ENCODE measurements at regions of chr10 and their contacts with region 1.

Region 1: DNA sequence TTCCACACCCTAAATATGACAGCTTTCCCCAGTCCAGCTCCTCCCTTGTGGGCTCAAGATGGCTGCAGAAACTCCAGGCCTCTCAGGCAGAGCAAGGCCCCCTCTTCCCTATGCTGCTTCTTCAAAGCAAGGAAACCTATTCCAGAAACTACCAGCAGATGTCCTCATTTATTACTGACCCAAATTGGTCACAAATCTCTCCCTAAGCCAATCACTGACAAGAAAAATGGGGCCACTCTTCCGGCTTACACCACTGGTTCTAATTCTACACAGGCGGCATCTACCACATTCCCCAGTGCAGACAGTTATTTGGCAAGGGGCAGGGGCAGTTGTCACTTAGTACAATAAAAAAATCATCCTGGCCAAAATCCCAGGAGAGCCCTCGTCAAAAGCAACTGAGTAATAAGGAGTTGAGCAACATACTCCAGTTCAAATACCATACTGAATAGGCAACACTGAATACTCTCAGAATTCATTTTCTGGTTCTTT is 150.4 kb downstream of the SFMBT2 start:
- H3K4me3 Mint-ChIP-seq: no peak overlapping the region
- H3K27ac Mint-ChIP-seq: peak overlapping the region; percentile 16
- H3K4me1 Mint-ChIP-seq: peaks cover 38% of the 10 kb centered on the region
- H3K27me3 Mint-ChIP-seq: no peaks in the 10 kb centered on the region

Region 2: DNA sequence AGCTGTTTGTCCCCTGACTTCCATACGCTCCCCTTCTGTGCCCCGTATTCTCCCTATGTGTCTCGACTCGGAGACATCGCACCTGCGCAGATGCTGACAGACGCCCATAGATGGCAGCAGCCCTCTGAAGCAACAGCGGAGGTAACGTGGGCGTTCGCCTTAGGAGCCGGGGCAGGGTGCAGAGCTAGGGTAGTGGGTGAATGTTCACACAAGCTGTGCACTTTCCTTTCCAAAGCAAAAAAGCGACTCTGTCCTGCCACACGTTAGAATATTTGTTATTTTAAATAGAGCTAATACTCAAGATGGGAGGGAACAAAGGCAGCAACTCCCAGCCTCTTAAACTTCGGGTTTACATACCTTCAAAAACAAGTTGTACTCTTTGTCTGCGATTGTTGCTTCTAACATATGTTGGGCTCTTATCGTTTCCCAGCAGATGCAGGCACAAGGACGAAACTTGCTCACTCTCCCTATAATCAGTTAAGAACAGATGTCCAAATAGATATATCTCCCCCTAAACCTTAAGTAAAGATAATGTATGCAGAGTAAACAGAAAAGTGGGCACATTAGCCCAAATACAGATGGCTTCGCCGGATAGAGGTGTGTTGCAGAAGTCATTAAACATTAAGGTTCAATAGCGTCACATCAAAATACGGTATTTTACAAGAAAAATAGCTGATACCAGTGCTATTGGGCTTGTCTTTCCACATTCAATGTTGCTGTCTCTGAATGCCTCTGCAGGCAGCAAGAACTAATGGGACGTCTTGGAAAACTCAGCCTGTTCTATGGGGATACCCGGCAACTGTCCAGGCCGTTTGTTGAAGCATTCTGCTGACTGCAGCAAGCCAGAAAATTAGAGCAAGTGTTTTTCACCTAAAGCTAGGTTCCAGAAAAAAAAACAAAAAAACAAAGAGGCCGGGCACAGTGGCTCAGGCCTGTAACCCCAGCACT is 340.1 kb before region 1 on chr10:
- intact Hi-C with region 1: loop called (anchors 10 kb)
- H3K4me3 Mint-ChIP-seq: no peak overlapping the region
- H3K27ac Mint-ChIP-seq: no peak overlapping the region
- H3K4me1 Mint-ChIP-seq: peaks cover 30% of the 10 kb centered on the region
- H3K27me3 Mint-ChIP-seq: peaks cover 4% of the 10 kb centered on the region

Region 3: DNA sequence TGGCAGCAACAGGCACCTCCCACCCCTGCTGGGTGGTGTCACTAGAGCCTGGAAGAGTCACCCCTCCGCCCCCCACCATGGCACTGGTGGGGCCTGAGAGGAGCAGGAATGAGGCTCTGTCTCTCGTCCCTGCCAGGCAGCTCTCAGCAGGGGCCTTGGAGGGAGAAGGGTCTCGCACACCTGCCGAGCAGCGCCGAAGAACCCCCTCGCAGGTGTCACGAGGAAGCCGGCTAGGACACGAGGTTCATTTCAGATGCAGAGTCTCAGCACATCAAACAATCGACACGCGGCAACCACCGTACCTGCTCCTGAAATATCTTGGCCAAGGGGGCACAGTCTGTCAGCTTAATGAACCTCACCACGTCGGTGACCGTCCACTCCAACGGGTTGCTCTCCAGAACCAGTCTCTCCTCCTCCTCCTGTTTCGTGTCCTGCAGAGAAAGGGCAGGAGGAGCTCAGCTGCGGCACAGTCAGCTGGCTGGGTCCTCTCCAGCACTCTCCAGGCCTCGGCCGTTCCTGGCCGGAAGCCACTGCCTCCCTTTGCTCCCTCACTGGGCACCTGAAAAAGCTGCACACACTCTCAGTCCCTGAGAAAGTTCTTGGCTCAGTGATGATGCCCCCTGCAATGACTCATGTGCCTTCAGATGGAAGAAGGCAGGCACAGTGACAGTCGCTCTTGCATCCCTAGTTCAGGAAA is 89.7 kb before region 1 on chr10:
- intact Hi-C with region 1: no loop called
- H3K4me3 Mint-ChIP-seq: no peak overlapping the region
- H3K27ac Mint-ChIP-seq: no peak overlapping the region
- H3K4me1 Mint-ChIP-seq: peaks cover 10% of the 10 kb centered on the region
- H3K27me3 Mint-ChIP-seq: no peaks in the 10 kb centered on the region

Region 4: DNA sequence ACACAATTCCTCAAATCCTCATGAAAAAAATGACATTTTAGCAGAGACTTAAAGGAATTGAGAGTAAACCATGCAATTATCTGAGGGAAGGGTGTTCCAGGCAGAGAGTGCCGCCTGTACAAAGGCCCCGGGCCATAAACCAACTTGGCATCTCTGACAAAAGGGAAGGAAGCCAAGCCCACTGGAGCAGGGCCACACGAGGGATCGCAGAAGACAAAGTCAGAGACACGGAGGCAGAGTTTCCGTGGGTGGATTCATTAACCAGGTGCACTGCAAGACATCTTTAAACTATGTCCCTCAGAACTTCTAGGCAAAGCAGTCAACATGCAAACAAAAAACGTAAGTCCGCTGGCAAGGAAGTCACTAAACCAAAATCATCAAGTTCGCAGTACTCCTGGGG is 58.4 kb after region 1 on chr10:
- intact Hi-C with region 1: loop called (anchors 5 kb)
- H3K4me3 Mint-ChIP-seq: peak overlapping the region; percentile 27
- H3K27ac Mint-ChIP-seq: peak overlapping the region; percentile 82
- H3K4me1 Mint-ChIP-seq: peaks cover 42% of the 10 kb centered on the region
- H3K27me3 Mint-ChIP-seq: peaks cover 3% of the 10 kb centered on the region

Measured in dendritic cell treated with granulocyte-macrophage colony-stimulating factor and Interleukin-4, amounts not matched to agents 40 ng/mL and 50 ng/mL, for 4 days (primary cell).